ENCODE measurements at regions of chr1 and their contacts with region 1.

Region 1: GRCh38 chr1:157819896-157820295 is at the start of gene FCRL1:
- DNase-seq: peak; percentile 77
- ATAC-seq: peak; percentile 86
- H3K4me3 ChIP-seq: peak within 1 kb of the TSS; percentile 66 to 97 (median 84)
- H3K4me3 Mint-ChIP-seq: no peak within 1 kb of the TSS
- H3K27ac ChIP-seq: peak within 1 kb of the TSS; percentile 50 to 83
- H3K27ac Mint-ChIP-seq: no peak within 1 kb of the TSS
- H3K4me1 ChIP-seq: peaks cover 20 to 23% of the 10 kb centered on the region in 2 donors
- H3K4me1 Mint-ChIP-seq: peaks cover 55% of the 10 kb centered on the region
- H3K27me3 ChIP-seq: no peaks in the 10 kb centered on the region
- H3K27me3 Mint-ChIP-seq: no peaks in the 10 kb centered on the region
- CTCF ChIP-seq: no peak
- total RNA-seq, gene FCRL1: 277 and 306 TPM in 2 replicates

Region 2: DNA sequence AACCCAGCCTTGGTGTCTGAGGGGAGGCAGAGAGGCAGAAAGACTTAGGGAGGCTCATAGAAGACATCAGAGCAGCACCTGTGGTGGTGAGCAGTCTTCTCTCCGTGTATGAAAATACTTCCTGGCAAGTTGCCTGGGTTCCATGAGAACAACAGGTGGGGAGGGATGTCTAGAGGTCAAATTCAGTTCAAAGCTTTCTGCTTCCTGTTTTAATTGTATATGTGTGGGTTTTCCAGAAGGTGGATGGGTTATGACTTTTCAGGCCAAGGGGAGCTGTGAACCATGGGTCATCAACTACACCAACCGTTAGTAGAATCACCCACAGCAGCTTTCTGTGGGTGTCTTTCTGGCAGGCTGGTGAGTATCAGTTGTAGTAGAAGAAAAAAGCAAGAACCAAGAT is 38.8 kb before region 1 on chr1:
- CTCF ChIA-PET with region 1: interaction called, 7 read pairs
- POLR2A ChIA-PET with region 1: interaction called, 11 read pairs
- intact Hi-C with region 1: loop called (anchors 2 kb)
- DNase-seq: peak; percentile 45
- ATAC-seq: peak; percentile 6
- H3K4me3 ChIP-seq: peak overlapping the region in 1 of 5 experiments; percentile 17
- H3K4me3 Mint-ChIP-seq: peak overlapping the region; percentile 64
- H3K27ac ChIP-seq: peak overlapping the region; percentile 31 to 53
- H3K27ac Mint-ChIP-seq: peak overlapping the region; percentile 93
- H3K4me1 ChIP-seq: peaks cover 83 to 90% of the 10 kb centered on the region in 2 donors
- H3K4me1 Mint-ChIP-seq: peaks cover 87% of the 10 kb centered on the region
- H3K27me3 ChIP-seq: no peaks in the 10 kb centered on the region
- H3K27me3 Mint-ChIP-seq: no peaks in the 10 kb centered on the region
- CTCF ChIP-seq: no peak

Region 3: DNA sequence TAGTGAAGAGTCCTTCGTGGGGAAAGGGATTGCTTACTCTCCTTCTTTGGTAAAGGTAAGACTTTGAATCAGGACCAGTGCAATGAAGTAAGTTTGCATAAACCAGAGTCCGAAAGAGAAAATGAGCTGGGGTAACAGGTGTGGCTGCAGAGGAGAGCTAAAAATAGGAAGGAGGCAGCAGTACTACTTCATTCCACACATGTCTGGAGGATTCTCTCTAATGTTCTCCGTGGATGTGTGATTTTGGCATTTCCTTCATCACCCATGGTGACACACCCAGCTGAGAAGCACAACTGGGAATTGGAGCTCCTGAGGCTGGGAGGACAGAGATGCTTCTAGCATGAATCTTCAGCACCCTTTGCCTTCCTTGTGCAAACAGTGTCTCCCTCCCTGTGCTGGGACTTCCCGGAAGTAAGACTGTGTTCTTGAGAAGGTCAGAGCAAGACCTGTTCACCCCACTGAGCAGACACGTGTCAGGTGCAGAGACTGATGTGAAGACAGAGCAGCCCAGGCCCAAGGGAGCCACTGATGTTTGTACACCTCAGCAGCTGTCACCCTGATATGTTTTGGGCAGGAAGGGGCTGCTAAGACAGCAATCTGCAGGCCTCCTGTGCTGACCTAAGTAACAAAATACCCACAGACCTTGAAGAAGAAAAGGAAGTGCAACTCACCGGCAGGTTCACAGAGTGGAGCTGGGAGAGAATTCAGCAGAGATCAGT is 13.3 kb before region 1 on chr1:
- CTCF ChIA-PET with region 1: interaction called, 26 read pairs
- POLR2A ChIA-PET with region 1: interaction called, 5 read pairs
- intact Hi-C with region 1: loop called (anchors 1 kb)
- DNase-seq: peak; percentile 92
- ATAC-seq: peak; percentile 92
- H3K4me3 ChIP-seq: peak overlapping the region; percentile 2 to 45 (median 28)
- H3K4me3 Mint-ChIP-seq: peak overlapping the region; percentile 84
- H3K27ac ChIP-seq: peak overlapping the region; percentile 71 to 83
- H3K27ac Mint-ChIP-seq: peak overlapping the region; percentile 87
- H3K4me1 ChIP-seq: peaks cover 86 to 98% of the 10 kb centered on the region in 2 donors
- H3K4me1 Mint-ChIP-seq: peaks cover 87% of the 10 kb centered on the region
- H3K27me3 ChIP-seq: no peaks in the 10 kb centered on the region
- H3K27me3 Mint-ChIP-seq: no peaks in the 10 kb centered on the region
- CTCF ChIP-seq: no peak

Region 4: GRCh38 chr1:157844089-157844830 is 24.4 kb after region 1 on chr1:
- CTCF ChIA-PET with region 1: interaction called, 5 read pairs
- POLR2A ChIA-PET with region 1: interaction called, 3 read pairs
- intact Hi-C with region 1: loop called (anchors 2 kb)
- DNase-seq: no peak
- ATAC-seq: no peak
- H3K4me3 ChIP-seq: no peak overlapping the region
- H3K4me3 Mint-ChIP-seq: peak overlapping the region; percentile 23
- H3K27ac ChIP-seq: peak overlapping the region in 1 of 2 donors; percentile 39
- H3K27ac Mint-ChIP-seq: peak overlapping the region; percentile 51
- H3K4me1 ChIP-seq: peaks cover 64 to 79% of the 10 kb centered on the region in 2 donors
- H3K4me1 Mint-ChIP-seq: peaks cover 75% of the 10 kb centered on the region
- H3K27me3 ChIP-seq: no peaks in the 10 kb centered on the region
- H3K27me3 Mint-ChIP-seq: no peaks in the 10 kb centered on the region
- CTCF ChIP-seq: no peak

Region 5: GRCh38 chr1:157852476-157852875 is 32.6 kb after region 1 on chr1:
- CTCF ChIA-PET with region 1: interaction called, 11 read pairs
- POLR2A ChIA-PET with region 1: no interaction called
- intact Hi-C with region 1: no loop called
- DNase-seq: no peak
- ATAC-seq: no peak
- H3K4me3 ChIP-seq: no peak overlapping the region
- H3K4me3 Mint-ChIP-seq: no peak overlapping the region
- H3K27ac ChIP-seq: no peak overlapping the region
- H3K27ac Mint-ChIP-seq: no peak overlapping the region
- H3K4me1 ChIP-seq: peaks cover 32 to 40% of the 10 kb centered on the region in 2 donors
- H3K4me1 Mint-ChIP-seq: peaks cover 62% of the 10 kb centered on the region
- H3K27me3 ChIP-seq: no peaks in the 10 kb centered on the region
- H3K27me3 Mint-ChIP-seq: no peaks in the 10 kb centered on the region
- CTCF ChIP-seq: no peak

Region 6: GRCh38 chr1:158013840-158014730 is 194.2 kb after region 1 on chr1:
- CTCF ChIA-PET with region 1: no interaction called
- POLR2A ChIA-PET with region 1: no interaction called
- intact Hi-C with region 1: no loop called
- DNase-seq: no peak
- ATAC-seq: no peak
- H3K4me3 ChIP-seq: no peak overlapping the region
- H3K4me3 Mint-ChIP-seq: no peak overlapping the region
- H3K27ac ChIP-seq: no peak overlapping the region
- H3K27ac Mint-ChIP-seq: no peak overlapping the region
- H3K4me1 ChIP-seq: no peaks in the 10 kb centered on the region
- H3K4me1 Mint-ChIP-seq: no peaks in the 10 kb centered on the region
- H3K27me3 ChIP-seq: peaks cover 0 to 32% (median 0%) of the 10 kb centered on the region in 4 experiments
- H3K27me3 Mint-ChIP-seq: peaks cover 45% of the 10 kb centered on the region
- CTCF ChIP-seq: no peak

Measured in B cell (primary cell).